Activated naive CD4-positive, alpha-beta T cell treated with anti-CD3 and anti-CD28 coated beads for 36 hours (primary cell): ENCODE measurements at regions of chr6 and their contacts with region 1.

Region 1: DNA sequence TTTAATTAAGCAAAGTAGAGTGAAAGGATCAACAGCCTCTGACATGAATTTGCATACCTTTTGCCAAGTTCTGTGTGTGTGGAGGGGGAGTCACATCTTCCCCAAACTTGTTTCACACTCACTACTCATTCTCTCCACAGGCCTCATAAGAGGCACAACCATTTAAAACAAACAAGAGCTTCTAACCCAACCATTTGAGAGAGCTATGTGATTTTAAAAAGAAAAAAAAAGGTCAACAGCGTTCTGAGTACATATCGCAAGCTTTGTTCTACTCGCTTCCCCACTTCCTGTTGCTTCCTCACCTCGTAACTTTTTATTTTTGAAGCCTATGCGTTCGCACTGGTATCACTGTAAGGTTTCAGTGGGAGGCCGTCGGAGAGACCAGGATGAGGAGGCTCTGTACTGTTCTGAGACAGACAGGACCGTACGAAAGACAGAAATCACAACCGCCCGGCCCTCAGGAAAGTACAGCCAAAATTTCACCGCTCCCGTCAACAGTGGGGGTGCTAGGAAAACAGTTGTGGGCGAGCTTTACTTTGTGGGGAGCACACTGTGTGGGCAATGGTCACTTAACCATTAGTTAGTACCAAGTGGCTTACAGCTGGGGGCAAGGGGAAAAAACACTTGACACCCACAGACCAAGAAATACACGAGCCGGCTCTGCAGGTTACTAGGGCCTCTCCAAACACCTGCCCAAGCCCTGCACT is 61.3 kb downstream of the TRERF1 start:
- DNase-seq: peak; percentile 89
- H3K4me3 Mint-ChIP-seq: peak overlapping the region; percentile 69
- H3K27ac Mint-ChIP-seq: peak overlapping the region; percentile 99
- H3K4me1 Mint-ChIP-seq: peaks cover 90% of the 10 kb centered on the region
- H3K27me3 Mint-ChIP-seq: no peaks in the 10 kb centered on the region

Region 2: DNA sequence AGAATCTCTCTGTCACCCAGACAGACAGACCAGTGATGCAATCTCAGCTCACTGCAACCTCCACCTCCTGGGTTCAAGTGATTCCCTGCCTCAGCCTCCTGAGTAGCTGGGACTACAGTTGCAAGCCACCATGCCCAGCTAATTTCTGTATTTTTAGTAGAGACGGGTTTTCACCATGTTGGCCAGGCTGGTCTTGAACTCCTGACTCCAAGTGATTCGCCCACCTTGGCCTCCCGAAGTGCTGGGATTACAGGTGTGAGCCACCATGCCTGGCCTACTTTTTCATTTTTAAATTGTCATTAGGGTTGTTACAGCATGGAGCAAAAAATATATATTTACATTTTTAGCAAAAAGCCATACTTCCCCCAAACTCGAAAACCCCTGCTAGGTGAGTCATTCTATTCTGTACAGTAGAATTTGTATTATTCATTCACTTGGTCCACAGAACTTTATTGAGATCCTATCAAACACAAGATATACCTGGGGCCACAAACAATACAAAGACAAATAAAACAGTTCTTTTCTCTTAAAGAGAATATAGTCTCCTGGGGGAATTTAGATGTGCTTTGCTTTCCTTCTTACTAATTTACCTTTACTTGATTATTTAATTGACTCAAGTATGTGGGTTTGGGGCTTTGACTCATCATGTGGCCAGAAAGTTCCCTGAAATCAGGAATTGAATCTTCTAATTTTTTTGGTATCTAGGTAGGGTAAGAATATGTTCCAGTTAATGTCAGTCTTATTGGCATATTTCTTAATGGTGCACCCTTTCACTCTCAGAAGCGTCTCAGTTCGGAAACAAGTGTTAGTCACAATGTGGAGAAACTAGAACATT is 432.1 kb before region 1 on chr6:
- CTCF ChIA-PET with region 1: no interaction called
- intact Hi-C with region 1: loop called (anchors 10 kb)
- DNase-seq: peak; percentile 76
- H3K4me3 Mint-ChIP-seq: peak overlapping the region; percentile 32
- H3K27ac Mint-ChIP-seq: peak overlapping the region; percentile 98
- H3K4me1 Mint-ChIP-seq: peaks cover 83% of the 10 kb centered on the region
- H3K27me3 Mint-ChIP-seq: no peaks in the 10 kb centered on the region

Region 3: GRCh38 chr6:42224222-42224989 is 166.0 kb before region 1 on chr6:
- CTCF ChIA-PET with region 1: no interaction called
- intact Hi-C with region 1: loop called (anchors 1 kb)
- DNase-seq: peak; percentile 17
- H3K4me3 Mint-ChIP-seq: peak overlapping the region; percentile 36
- H3K27ac Mint-ChIP-seq: peak overlapping the region; percentile 80
- H3K4me1 Mint-ChIP-seq: peaks cover 22% of the 10 kb centered on the region
- H3K27me3 Mint-ChIP-seq: no peaks in the 10 kb centered on the region

Region 4: DNA sequence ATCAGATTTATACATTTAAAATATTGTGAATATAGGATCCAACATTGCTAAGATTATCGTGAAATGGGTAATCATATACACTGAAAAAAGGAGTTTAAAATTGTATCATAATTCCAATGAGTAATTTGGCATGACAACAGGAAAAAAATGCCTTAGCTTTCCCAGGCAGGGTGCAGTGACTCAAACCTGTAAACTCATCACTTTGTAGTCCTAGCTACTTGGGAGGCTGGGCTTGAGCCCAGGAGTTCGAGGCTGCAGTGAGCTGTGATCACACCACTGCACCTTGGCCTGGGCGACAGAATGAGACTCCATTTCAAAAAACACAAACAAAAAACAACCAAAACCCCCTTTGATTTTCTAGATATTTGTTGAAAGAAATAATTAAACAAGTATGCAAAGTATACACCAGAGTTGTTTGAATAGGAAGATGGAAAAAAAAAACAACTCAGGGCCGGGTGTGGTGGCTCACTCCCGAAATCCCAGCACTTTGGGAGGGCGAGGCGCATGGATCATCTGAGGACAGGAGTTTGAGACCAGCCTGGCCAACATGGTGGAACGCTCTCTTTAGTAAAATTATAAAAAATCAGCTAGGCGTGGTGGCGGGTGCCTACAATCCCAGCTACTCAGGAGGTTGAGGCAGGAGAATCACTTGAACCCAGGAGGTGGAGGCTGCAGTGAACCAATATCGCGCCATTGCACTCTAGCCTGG is 37.4 kb before region 1 on chr6:
- CTCF ChIA-PET with region 1: interaction called, 5 read pairs
- intact Hi-C with region 1: loop called (anchors 1 kb)
- DNase-seq: no peak
- H3K4me3 Mint-ChIP-seq: no peak overlapping the region
- H3K27ac Mint-ChIP-seq: no peak overlapping the region
- H3K4me1 Mint-ChIP-seq: peaks cover 11% of the 10 kb centered on the region
- H3K27me3 Mint-ChIP-seq: no peaks in the 10 kb centered on the region

Region 5: GRCh38 chr6:42378125-42378524 is 12.3 kb before region 1 on chr6:
- CTCF ChIA-PET with region 1: interaction called, 9 read pairs
- intact Hi-C with region 1: loop called (anchors 1 kb)
- DNase-seq: peak; percentile 66
- H3K4me3 Mint-ChIP-seq: peak overlapping the region; percentile 7
- H3K27ac Mint-ChIP-seq: peak overlapping the region; percentile 47
- H3K4me1 Mint-ChIP-seq: peaks cover 47% of the 10 kb centered on the region
- H3K27me3 Mint-ChIP-seq: no peaks in the 10 kb centered on the region

Region 6: GRCh38 chr6:42423244-42423643 is 32.9 kb after region 1 on chr6:
- CTCF ChIA-PET with region 1: interaction called, 7 read pairs
- intact Hi-C with region 1: loop called (anchors 1 kb)
- DNase-seq: peak; percentile 72
- H3K4me3 Mint-ChIP-seq: no peak overlapping the region
- H3K27ac Mint-ChIP-seq: no peak overlapping the region
- H3K4me1 Mint-ChIP-seq: peaks cover 53% of the 10 kb centered on the region
- H3K27me3 Mint-ChIP-seq: no peaks in the 10 kb centered on the region

Region 7: DNA sequence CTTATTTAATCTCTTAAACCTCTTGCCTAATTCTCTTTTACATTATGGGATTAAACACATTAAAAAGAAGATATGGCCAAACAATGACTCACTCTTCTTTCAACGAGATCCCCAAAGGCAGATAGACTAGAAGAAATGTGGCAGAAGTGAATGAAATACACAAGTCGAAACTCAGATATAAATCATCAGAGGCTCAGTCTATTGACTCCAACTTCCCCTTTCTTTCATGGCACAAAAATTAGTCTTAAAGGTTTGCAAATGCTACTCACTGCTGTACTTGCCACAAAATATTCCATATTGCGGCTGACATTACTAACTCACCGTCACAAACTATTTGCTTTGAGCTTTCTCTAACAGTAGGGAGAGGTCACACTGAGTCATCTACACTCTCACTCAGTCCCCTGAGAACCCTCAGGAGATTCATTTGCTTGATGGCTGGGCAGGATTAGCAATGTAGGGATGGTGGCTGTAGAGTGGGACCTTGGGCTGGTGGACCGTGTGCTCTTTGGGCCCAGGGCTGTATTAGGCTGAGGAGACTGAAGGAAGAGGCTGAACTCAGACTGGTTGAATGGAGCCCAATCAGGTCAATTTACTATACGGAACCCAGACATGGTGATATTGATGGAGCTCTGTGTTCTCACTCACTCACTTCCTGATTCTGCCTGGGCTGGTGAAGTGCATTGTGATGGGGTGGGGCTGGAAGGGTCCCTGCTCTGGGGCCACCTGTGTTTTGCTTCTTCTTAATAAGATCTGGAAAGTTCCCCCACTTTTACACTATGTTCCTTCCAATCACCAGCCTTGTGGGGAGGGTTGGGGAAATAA is 130.6 kb after region 1 on chr6:
- CTCF ChIA-PET with region 1: no interaction called
- intact Hi-C with region 1: loop called (anchors 1 kb)
- DNase-seq: peak; percentile 56
- H3K4me3 Mint-ChIP-seq: no peak overlapping the region
- H3K27ac Mint-ChIP-seq: peak overlapping the region; percentile 38
- H3K4me1 Mint-ChIP-seq: peaks cover 18% of the 10 kb centered on the region
- H3K27me3 Mint-ChIP-seq: no peaks in the 10 kb centered on the region